PC-3 (cell line): ENCODE measurements at regions of chr22 and their contacts with region 1.

Region 1: DNA sequence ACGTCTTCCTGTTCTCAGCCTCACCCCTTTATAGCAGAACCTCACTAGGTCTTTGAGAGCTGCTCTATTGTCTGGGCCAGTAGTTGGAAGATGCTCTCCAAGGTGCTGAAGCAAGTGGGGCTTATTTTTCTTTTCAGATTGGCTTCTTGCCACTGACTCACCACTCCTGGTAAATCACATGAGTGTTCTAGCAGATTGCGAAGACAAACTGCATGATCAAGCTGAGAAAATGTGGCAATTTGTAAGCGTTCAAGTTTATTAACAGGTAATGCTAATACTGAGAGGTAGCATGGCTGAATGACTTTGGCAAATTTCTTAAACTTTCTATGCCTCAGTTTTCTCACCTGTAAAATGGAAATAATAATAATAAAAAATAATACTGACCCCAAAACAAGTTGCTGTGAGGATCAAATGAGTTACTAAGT is 59.2 kb downstream of the CACNG2 start:
- DNase-seq: peak; percentile 94
- ATAC-seq: no peak
- H3K4me3 ChIP-seq: no peak overlapping the region
- H3K27ac ChIP-seq: no peak overlapping the region
- H3K4me1 ChIP-seq: peaks cover 14% of the 10 kb centered on the region; the same call in 1 of the 2 replicates
- H3K27me3 ChIP-seq: peaks cover 28% of the 10 kb centered on the region
- CTCF ChIP-seq: no peak

Region 2: GRCh38 chr22:36569999-36570398 is 74.3 kb before region 1 on chr22:
- CTCF ChIA-PET with region 1: no interaction called
- POLR2A ChIA-PET with region 1: no interaction called
- intact Hi-C with region 1: no loop called
- DNase-seq: no peak
- ATAC-seq: no peak
- H3K4me3 ChIP-seq: no peak overlapping the region
- H3K27ac ChIP-seq: no peak overlapping the region
- H3K4me1 ChIP-seq: peaks cover 19% of the 10 kb centered on the region
- H3K27me3 ChIP-seq: no peaks in the 10 kb centered on the region
- CTCF ChIP-seq: no peak

Region 3: DNA sequence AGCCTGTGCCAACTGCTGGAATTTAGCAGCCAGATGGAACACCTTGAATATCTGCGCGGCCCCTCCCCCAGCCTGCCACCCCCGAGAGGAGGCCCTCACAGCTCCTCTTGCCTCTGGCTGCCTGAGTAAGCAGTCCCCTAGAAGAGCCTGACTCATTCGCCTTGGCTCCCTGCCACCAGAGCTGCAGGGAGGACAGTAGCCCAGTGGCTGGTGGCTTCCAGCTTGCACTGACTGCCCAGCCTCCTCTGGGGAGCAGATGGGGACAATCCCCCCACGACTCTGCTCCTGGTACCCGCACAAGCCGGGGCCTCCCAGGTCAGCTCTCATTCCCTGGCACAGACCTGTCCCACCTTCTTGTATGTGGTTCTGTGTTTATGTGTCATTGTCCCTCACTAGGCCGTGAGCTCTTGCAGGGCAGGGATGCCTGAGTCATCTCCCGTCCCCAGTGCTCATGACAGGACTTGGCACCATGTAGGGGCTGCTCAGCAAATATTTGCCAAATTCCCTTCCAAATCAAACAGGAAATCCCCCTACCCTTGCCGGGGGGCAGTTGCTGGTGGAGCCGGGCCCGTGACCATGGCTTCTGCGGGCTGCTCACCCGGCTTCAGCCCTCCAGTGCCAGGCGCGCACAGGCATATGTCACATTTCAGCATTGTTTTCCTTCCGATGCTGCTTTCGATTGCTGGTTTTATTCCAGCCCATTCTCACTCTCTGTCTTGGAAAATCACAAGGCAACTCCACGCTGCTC is 15.6 kb after region 1 on chr22:
- CTCF ChIA-PET with region 1: no interaction called
- POLR2A ChIA-PET with region 1: no interaction called
- intact Hi-C with region 1: loop called (anchors 2 kb)
- DNase-seq: peak; percentile 98
- ATAC-seq: peak; percentile 79
- H3K4me3 ChIP-seq: peak overlapping the region; percentile 61
- H3K27ac ChIP-seq: peak overlapping the region; percentile 97
- H3K4me1 ChIP-seq: peaks cover 30% of the 10 kb centered on the region
- H3K27me3 ChIP-seq: no peaks in the 10 kb centered on the region
- CTCF ChIP-seq: no peak

Region 4: DNA sequence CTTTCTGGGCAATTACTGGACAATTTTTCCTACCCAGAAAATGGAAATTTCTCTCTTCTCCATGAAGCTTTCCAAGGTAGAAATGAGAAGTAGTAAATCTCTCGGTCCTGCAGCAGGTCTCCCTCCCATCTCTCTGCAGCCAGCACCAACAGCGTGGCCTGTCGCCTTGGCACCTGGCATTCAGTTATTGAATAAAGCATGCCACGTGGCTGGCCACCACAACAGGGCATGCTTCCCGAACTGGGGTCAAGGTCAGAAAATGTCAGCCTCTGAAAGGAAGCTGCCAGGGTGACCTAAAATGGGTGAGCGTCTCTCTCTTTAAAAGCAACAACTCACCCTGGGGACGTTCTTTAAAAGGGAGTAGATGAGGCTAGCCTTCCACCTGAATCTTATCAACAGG is 45.2 kb after region 1 on chr22:
- CTCF ChIA-PET with region 1: no interaction called
- POLR2A ChIA-PET with region 1: no interaction called
- intact Hi-C with region 1: no loop called
- DNase-seq: no peak
- ATAC-seq: no peak
- H3K4me3 ChIP-seq: no peak overlapping the region
- H3K27ac ChIP-seq: no peak overlapping the region
- H3K4me1 ChIP-seq: no peaks in the 10 kb centered on the region
- H3K27me3 ChIP-seq: no peaks in the 10 kb centered on the region; the same call in 1 of the 2 replicates
- CTCF ChIP-seq: no peak

Region 5: GRCh38 chr22:36702842-36703215 is 58.5 kb after region 1 on chr22:
- CTCF ChIA-PET with region 1: no interaction called
- POLR2A ChIA-PET with region 1: interaction called, 3 read pairs
- intact Hi-C with region 1: loop called (anchors 10 kb)
- DNase-seq: no peak
- ATAC-seq: no peak
- H3K4me3 ChIP-seq: no peak overlapping the region
- H3K27ac ChIP-seq: no peak overlapping the region
- H3K4me1 ChIP-seq: peaks cover 5% of the 10 kb centered on the region; the same call in 1 of the 2 replicates
- H3K27me3 ChIP-seq: peaks cover 54% of the 10 kb centered on the region
- CTCF ChIP-seq: no peak

Region 6: DNA sequence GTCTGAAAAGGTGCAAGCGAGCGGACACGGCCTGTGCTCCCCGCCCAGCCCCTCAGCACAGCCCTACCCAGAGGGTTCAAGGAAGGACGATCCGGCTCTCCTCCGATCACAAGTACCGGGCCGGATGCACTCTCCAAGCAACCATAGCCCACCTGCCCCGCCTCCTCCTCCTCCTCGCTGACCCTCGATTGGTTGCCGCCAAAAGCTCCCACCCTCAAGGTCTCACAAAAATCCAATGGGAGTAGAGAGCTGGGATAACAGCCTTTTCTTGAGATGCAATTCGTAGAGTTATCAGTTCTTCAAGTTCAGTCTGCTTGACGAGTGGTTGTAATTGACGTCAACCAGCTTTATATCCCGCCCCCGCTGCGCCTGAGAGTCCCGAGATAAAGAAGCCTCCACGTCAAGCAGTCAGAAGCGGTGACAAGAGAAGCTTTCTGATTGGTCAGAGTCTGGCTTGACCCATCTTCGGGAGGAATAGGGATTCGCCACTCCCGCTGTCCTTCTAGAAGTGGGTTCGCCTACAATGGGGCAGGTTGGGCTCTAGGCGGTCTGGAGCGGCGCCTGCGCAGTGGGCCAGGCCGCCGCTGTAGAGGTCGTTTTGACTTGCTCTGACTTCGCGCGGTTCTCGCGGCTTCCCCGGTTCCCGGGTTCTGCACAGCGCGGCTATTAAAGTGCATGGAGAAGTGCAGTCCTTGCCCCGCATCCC is 131.8 kb after region 1 on chr22 and contains the start of gene IFT27:
- CTCF ChIA-PET with region 1: interaction called, 3 read pairs
- POLR2A ChIA-PET with region 1: no interaction called
- intact Hi-C with region 1: loop called (anchors 10 kb)
- DNase-seq: peak; percentile 98
- ATAC-seq: peak; percentile 94
- H3K4me3 ChIP-seq: peak within 1 kb of the TSS; percentile 88
- H3K27ac ChIP-seq: no peak within 1 kb of the TSS
- H3K4me1 ChIP-seq: peaks cover 13% of the 10 kb centered on the region; the same call in 1 of the 2 replicates
- H3K27me3 ChIP-seq: no peaks in the 10 kb centered on the region
- CTCF ChIP-seq: no peak
- total RNA-seq, gene IFT27: 19.9 and 23.3 TPM in 2 replicates